ENCODE measurements at regions of chr20 and their contacts with region 1.

Region 1: DNA sequence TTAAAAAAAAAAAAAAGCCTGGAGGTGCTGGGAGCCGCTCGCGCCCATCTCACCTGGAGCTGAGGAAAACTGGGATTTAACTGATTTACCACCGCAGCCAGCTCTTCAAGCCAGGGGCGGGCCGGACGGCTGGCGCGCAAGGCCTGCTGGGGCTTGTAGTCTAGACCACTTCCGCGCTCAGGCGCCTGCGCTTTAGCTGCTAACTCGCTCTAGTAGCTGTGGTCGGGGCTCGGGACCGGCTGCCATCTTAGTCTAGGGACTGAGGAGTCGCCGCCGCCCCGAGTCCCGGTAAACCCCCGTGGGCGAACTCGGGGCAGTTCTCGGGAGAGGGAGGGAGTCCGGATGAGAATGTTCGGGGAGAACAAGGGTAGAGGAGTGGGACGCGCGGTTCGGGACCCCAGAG is at the start of gene ITCH:
- DNase-seq: peak; percentile 91
- H3K4me3 Mint-ChIP-seq: peak within 1 kb of the TSS; percentile 100
- H3K27ac Mint-ChIP-seq: peak within 1 kb of the TSS; percentile 100
- H3K4me1 Mint-ChIP-seq: peaks cover 26% of the 10 kb centered on the region
- H3K27me3 Mint-ChIP-seq: no peaks in the 10 kb centered on the region
- total RNA-seq, gene ITCH: 55.6 and 66.4 TPM in 2 replicates

Region 2: GRCh38 chr20:34111702-34112599 is 251.1 kb before region 1 on chr20 and contains the start of gene EIF2S2:
- intact Hi-C with region 1: loop called (anchors 1 kb)
- DNase-seq: peak; percentile 96
- H3K4me3 Mint-ChIP-seq: peak within 1 kb of the TSS; percentile 88
- H3K27ac Mint-ChIP-seq: peak within 1 kb of the TSS; percentile 98
- H3K4me1 Mint-ChIP-seq: peaks cover 46% of the 10 kb centered on the region
- H3K27me3 Mint-ChIP-seq: peaks cover 1% of the 10 kb centered on the region
- total RNA-seq, gene EIF2S2: 99.8 and 105 TPM in 2 replicates

Region 3: GRCh38 chr20:34312544-34313217 is 50.4 kb before region 1 on chr20:
- intact Hi-C with region 1: loop called (anchors 2 kb)
- DNase-seq: peak; percentile 80
- H3K4me3 Mint-ChIP-seq: no peak overlapping the region
- H3K27ac Mint-ChIP-seq: no peak overlapping the region
- H3K4me1 Mint-ChIP-seq: no peaks in the 10 kb centered on the region
- H3K27me3 Mint-ChIP-seq: peaks cover 27% of the 10 kb centered on the region

Region 4: DNA sequence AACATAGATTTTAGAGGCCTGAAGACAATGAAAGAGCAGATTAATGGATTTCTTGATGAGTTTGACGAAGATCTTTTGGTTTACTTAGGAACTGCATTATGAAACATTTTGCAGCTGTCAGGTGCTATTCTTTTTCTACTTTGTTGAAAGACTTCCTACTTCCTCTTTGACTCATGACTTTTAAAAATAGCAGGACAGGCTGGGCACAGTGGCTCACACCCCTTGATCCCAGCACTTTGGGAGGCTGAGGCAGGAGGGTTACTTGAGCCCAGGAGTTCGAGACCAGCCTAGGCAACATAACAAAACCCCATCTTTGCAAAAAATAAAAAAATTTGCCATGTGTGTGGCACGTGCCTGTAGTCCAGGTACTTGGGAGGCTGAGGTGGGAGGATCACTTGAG is 52.0 kb after region 1 on chr20:
- intact Hi-C with region 1: no loop called
- DNase-seq: no peak
- H3K4me3 Mint-ChIP-seq: no peak overlapping the region
- H3K27ac Mint-ChIP-seq: peak overlapping the region; percentile 74
- H3K4me1 Mint-ChIP-seq: peaks cover 20% of the 10 kb centered on the region
- H3K27me3 Mint-ChIP-seq: no peaks in the 10 kb centered on the region

Region 5: GRCh38 chr20:34516247-34517113 is 153.4 kb after region 1 on chr20 and contains the start of gene DYNLRB1:
- intact Hi-C with region 1: loop called (anchors 1 kb)
- DNase-seq: peak; percentile 93
- H3K4me3 Mint-ChIP-seq: peak within 1 kb of the TSS; percentile 95
- H3K27ac Mint-ChIP-seq: peak within 1 kb of the TSS; percentile 96
- H3K4me1 Mint-ChIP-seq: peaks cover 35% of the 10 kb centered on the region
- H3K27me3 Mint-ChIP-seq: no peaks in the 10 kb centered on the region
- total RNA-seq, gene DYNLRB1: 92.0 and 104 TPM in 2 replicates

Region 6: GRCh38 chr20:34825530-34826362 is 462.7 kb after region 1 on chr20 and contains the start of gene NCOA6:
- intact Hi-C with region 1: loop called (anchors 1 kb)
- DNase-seq: peak; percentile 68
- H3K4me3 Mint-ChIP-seq: peak within 1 kb of the TSS; percentile 97
- H3K27ac Mint-ChIP-seq: peak within 1 kb of the TSS; percentile 91
- H3K4me1 Mint-ChIP-seq: peaks cover 30% of the 10 kb centered on the region
- H3K27me3 Mint-ChIP-seq: peaks cover 13% of the 10 kb centered on the region
- total RNA-seq, gene NCOA6: 25.5 and 29.1 TPM in 2 replicates